MCF 10A (cell line): ENCODE measurements at regions of chr11 and their contacts with region 1.

Region 1: DNA sequence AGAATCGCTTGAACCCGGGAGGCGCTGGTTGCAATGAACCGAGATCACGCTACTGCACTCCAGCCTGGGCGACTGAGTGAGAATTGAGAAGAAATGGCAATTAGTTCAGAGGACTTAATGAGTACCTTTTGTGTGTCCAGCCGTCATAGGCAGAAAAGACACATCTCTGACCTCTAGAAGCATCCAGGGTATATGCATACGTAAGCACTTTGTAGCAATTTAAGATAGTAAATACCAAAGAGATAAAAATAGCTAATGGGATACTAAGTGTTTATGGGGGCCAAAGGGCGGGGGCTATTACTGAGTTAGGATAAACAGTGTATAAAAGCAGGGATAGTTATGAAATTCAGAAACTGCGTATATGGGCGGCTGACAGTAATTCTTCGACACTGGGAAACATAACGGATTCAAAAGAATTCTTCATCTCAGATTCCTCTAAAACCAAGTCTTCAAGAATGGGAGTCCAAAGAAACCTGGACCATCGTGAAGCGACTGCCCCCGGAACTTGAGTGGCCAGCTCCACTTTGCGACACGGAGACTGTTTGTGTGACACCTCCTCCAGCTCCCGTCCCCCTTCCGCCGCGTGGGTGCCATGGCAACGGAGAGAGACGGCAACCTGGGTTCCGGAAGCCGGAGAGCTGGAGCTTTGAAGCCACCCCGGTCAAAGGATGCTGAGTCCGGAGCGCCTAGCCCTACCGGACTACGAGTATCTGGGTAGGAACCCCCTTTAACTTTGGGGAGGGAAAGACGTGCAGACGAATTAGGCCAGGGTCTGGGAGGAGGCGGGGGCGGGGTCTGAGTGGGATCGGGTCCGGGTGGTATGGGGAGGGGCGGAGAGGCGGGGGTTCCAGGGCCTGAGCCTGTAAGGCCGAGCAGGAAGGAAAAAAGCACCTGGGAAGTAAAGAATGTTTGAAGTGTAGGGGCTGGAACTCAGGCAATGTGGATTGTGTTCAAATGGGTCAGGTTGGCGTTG is at the start of gene CSTPP1:
- DNase-seq: peak; percentile 93
- H3K4me3 Mint-ChIP-seq: peak within 1 kb of the TSS; percentile 95
- H3K27ac Mint-ChIP-seq: peak within 1 kb of the TSS; percentile 93
- H3K4me1 Mint-ChIP-seq: peaks cover 19% of the 10 kb centered on the region
- H3K27me3 Mint-ChIP-seq: peaks cover 19% of the 10 kb centered on the region
- CTCF ChIP-seq: no peak
- total RNA-seq, gene CSTPP1: 19.2 and 22.0 TPM in 2 replicates

Region 2: GRCh38 chr11:46947469-46948077 is 11.1 kb after region 1 on chr11:
- CTCF ChIA-PET with region 1: interaction called, 6 read pairs
- POLR2A ChIA-PET with region 1: interaction called, 10 read pairs
- intact Hi-C with region 1: no loop called
- DNase-seq: no peak
- H3K4me3 Mint-ChIP-seq: no peak overlapping the region
- H3K27ac Mint-ChIP-seq: no peak overlapping the region
- H3K4me1 Mint-ChIP-seq: peaks cover 13% of the 10 kb centered on the region
- H3K27me3 Mint-ChIP-seq: no peaks in the 10 kb centered on the region
- CTCF ChIP-seq: no peak

Region 3: DNA sequence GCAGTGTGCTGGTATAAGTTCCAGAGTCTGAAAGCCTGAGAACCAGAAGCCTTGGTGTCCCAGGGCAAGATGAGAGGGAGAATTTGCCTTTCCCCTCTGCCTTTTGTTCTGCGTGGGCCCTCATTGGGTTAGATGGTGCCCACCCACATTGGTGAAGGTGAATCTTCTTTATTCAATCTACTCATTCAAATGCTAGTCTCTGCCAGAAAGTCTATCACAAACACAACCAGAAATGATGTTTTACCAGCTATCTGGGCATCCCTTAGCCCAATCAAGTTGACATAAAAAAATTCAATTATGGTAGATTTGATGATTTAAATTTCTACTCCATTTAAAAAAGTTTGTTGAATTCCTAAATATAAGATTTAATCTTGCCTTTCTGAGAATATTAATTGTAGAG is 22.4 kb after region 1 on chr11:
- CTCF ChIA-PET with region 1: no interaction called
- POLR2A ChIA-PET with region 1: no interaction called
- intact Hi-C with region 1: no loop called
- DNase-seq: no peak
- H3K4me3 Mint-ChIP-seq: no peak overlapping the region
- H3K27ac Mint-ChIP-seq: no peak overlapping the region
- H3K4me1 Mint-ChIP-seq: no peaks in the 10 kb centered on the region
- H3K27me3 Mint-ChIP-seq: no peaks in the 10 kb centered on the region
- CTCF ChIP-seq: no peak